ENCODE measurements at regions of chr4 and their contacts with region 1.

Region 1: GRCh38 chr4:5979976-5980375 is 38.3 kb downstream of the C4orf50 start:
- DNase-seq: no peak
- ATAC-seq: peak; percentile 87
- H3K4me3 ChIP-seq: no peak overlapping the region
- H3K27ac ChIP-seq: no peak overlapping the region
- H3K4me1 ChIP-seq: no peaks in the 10 kb centered on the region
- H3K27me3 ChIP-seq: peaks cover 12% of the 10 kb centered on the region; the same call in 1 of the 2 replicates
- CTCF ChIP-seq: peak; percentile 74

Region 2: DNA sequence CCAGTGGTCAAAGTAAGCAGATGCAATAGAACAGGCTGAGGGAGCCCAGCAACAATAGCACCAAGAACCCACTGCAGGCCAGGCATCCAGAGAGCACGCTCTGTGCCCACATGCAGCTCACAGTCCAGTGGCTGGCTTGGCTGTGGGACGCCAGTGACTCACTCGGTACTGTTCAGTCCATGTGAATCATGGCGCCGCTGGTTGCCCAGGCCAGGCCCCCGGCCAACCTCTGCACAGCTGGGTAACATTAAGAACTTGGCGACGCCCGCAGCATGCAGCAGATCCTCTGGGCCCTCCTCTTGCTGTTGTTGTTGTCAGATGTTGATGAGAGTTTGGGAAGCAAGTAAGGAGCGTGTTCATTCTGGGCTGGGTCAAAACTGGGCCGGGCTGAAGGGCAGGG is 1060.0 kb before region 1 on chr4:
- CTCF ChIA-PET with region 1: no interaction called
- POLR2A ChIA-PET with region 1: no interaction called
- in situ Hi-C with region 1: no loop called
- intact Hi-C with region 1: no loop called
- DNase-seq: no peak
- ATAC-seq: no peak
- H3K4me3 ChIP-seq: no peak overlapping the region
- H3K27ac ChIP-seq: no peak overlapping the region
- H3K4me1 ChIP-seq: no peaks in the 10 kb centered on the region
- H3K27me3 ChIP-seq: no peaks in the 10 kb centered on the region
- CTCF ChIP-seq: no peak

Region 3: DNA sequence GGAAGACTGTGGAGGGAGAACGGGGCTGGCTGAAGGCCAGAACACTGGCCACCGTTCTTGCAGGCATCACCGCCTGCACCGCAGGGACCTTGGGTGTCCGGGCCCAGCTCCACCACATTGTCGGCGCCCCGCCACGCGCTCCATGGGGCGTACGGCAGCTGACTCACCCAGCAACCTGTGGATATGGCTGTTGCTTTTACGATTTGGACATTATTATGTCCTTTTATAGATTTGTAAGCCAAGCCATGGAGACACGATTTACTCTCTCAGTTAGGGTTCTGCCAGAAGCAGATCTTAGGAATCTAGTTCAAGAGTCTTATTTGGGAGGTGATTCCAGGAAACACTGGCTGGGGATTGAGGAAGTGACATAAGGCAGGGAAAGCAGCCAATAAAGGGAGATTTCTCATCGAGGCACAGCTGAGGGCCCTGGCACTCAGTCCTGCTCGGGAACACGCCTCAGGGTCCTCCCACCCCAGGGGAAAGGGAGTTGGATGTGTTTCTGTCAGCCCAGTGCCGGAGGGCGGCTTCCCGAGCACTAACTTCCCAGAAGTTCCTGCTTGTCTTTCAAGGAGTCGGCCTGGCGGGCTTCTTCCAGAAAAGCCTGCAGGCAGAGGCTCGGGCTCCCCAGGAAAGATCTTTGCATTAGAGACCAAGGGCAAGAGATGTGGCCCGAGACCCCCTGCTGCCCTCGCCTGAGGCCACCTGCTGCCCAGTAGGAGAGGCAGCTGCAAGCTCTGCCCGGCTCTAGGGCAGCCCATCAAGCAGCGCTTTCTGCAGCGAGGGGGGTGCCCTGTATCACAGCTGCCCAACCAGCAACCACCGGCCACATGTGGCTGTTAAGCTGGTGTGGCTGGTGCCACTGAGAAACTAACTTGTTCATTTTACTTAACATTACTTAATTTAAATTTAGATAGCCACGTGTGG is 140.0 kb before region 1 on chr4:
- CTCF ChIA-PET with region 1: no interaction called
- POLR2A ChIA-PET with region 1: no interaction called
- in situ Hi-C with region 1: no loop called
- intact Hi-C with region 1: loop called (anchors 10 kb)
- DNase-seq: no peak
- ATAC-seq: no peak
- H3K4me3 ChIP-seq: no peak overlapping the region
- H3K27ac ChIP-seq: no peak overlapping the region
- H3K4me1 ChIP-seq: no peaks in the 10 kb centered on the region
- H3K27me3 ChIP-seq: no peaks in the 10 kb centered on the region; the same call in 1 of the 2 replicates
- CTCF ChIP-seq: no peak